CD14-positive monocyte (primary cell): ENCODE measurements at regions of chr6 and their contacts with region 1.

Region 1: DNA sequence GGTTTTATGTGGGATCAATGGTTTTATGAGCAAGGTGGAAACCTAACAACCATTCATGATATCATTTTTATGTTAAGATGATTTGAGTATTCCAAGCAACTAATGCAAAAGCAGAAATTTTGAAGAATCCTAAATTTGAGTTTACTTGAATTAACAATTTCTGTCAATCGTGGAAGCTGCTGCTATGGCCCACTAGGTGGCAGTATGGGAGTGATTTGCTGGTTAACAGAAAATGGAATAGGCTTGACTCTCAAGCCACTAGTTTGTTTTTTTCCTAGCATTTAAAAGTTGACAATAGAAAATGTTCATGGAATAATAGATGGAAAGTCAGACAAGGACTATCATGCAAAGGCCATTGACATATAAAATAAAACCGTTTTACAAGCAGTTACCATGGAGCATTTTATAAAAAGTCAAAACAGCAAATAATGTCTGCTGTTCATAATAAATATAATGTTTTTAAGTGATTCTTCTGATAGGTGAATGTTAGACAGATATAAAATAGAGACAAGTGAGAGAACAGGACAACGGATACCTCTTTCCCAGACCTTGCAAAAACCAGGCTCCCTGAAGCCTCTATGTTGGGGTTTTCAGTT is 43.0 kb upstream of the TMEM200A start:
- DNase-seq: peak; percentile 3 to 13 (median 6)
- H3K4me3 ChIP-seq: no peak overlapping the region
- H3K4me3 Mint-ChIP-seq: no peak overlapping the region
- H3K27ac ChIP-seq: no peak overlapping the region
- H3K27ac Mint-ChIP-seq: no peak overlapping the region
- H3K4me1 ChIP-seq: no peaks in the 10 kb centered on the region
- H3K4me1 Mint-ChIP-seq: no peaks in the 10 kb centered on the region
- H3K27me3 ChIP-seq: no peaks in the 10 kb centered on the region
- H3K27me3 Mint-ChIP-seq: peaks cover 0 to 4% (median 3%) of the 10 kb centered on the region in 3 donors
- CTCF ChIP-seq: peak; percentile 84

Region 2: GRCh38 chr6:129340983-129341382 is 981.8 kb before region 1 on chr6:
- intact Hi-C with region 1: no loop called
- DNase-seq: no peak
- H3K4me3 ChIP-seq: no peak overlapping the region
- H3K4me3 Mint-ChIP-seq: no peak overlapping the region
- H3K27ac ChIP-seq: no peak overlapping the region
- H3K27ac Mint-ChIP-seq: no peak overlapping the region
- H3K4me1 ChIP-seq: no peaks in the 10 kb centered on the region
- H3K4me1 Mint-ChIP-seq: no peaks in the 10 kb centered on the region
- H3K27me3 ChIP-seq: no peaks in the 10 kb centered on the region
- H3K27me3 Mint-ChIP-seq: peaks cover 0 to 2% (median 0%) of the 10 kb centered on the region in 3 donors
- CTCF ChIP-seq: no peak

Region 3: DNA sequence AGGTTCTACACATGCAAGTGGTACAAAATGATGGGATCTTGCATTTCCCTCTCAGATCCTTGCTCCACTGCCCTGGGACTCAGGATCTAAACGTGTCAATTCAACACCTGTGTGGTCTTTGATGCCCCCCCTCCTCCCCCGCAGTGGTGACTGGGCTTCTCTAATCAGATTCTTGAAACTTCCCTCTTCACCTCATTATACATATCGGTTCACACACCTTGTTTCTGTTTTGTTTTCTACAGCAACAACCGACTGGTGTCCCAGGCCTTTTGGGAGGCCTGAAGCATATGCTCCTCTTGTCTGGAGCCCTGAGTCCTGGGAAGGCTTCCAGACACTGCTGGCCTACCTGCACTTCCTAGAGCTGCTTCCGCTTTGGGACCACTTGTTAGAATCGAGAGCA is 120.0 kb before region 1 on chr6:
- intact Hi-C with region 1: no loop called
- DNase-seq: no peak
- H3K4me3 ChIP-seq: no peak overlapping the region
- H3K4me3 Mint-ChIP-seq: no peak overlapping the region
- H3K27ac ChIP-seq: no peak overlapping the region
- H3K27ac Mint-ChIP-seq: no peak overlapping the region
- H3K4me1 ChIP-seq: no peaks in the 10 kb centered on the region
- H3K4me1 Mint-ChIP-seq: no peaks in the 10 kb centered on the region
- H3K27me3 ChIP-seq: no peaks in the 10 kb centered on the region
- H3K27me3 Mint-ChIP-seq: peaks cover 0 to 2% (median 2%) of the 10 kb centered on the region in 3 donors
- CTCF ChIP-seq: no peak

Region 4: DNA sequence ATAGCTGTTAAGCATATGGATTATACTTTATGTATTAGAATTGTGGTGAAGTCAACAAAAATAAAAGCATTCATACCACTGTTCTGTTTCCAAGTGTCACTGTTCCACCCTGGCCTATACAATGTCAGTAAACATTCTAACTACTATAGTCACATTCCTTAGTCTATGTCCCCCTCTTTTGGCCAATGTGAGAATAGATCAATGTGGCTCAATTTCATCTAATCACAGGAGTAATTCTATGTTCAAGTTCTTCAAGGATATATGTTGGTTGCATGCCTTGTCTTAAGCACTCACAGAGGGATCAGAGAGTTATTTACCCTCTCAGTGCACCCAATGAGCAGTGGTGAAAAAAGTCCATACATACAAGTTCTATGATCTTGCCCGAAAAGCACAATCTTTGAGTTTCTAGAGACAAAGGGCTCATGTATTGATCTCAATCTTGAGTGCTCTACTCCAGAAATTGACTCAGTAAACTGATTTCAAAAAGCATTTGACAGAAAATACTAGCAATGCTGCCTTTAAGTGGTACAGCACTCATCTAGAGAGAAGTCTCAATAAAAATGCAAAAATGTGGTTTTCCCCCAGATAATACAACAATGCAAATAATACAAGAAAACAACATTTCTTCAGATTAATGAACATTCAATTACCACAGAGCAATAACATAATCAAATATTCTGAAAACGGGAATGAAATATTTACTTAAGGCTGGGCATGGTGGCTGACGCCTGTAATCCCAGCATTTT is 521.0 kb after region 1 on chr6:
- intact Hi-C with region 1: loop called in 1 of 2 experiments (anchors 10 kb)
- DNase-seq: no peak
- H3K4me3 ChIP-seq: no peak overlapping the region
- H3K4me3 Mint-ChIP-seq: no peak overlapping the region
- H3K27ac ChIP-seq: no peak overlapping the region
- H3K27ac Mint-ChIP-seq: no peak overlapping the region
- H3K4me1 ChIP-seq: no peaks in the 10 kb centered on the region
- H3K4me1 Mint-ChIP-seq: no peaks in the 10 kb centered on the region
- H3K27me3 ChIP-seq: no peaks in the 10 kb centered on the region
- H3K27me3 Mint-ChIP-seq: no peaks in the 10 kb centered on the region
- CTCF ChIP-seq: peak; percentile 29